CD4-positive, alpha-beta T cell (primary cell): ENCODE measurements at regions of chr16 and their contacts with region 1.

Region 1: GRCh38 chr16:67159593-67160406 is at the starts of genes FBXL8 and TRADD:
- DNase-seq: peak; percentile 60 to 91 (median 74)
- ATAC-seq: peak; percentile 66
- H3K4me3 ChIP-seq: peak within 1 kb of the TSS; percentile 100
- H3K4me3 Mint-ChIP-seq: peak within 1 kb of the TSS; percentile 95
- H3K27ac ChIP-seq: peak within 1 kb of the TSS; percentile 81 to 98
- H3K27ac Mint-ChIP-seq: peak within 1 kb of the TSS; percentile 95
- H3K4me1 ChIP-seq: peaks cover 92% of the 10 kb centered on the region
- H3K4me1 Mint-ChIP-seq: peaks cover 58% of the 10 kb centered on the region
- H3K27me3 ChIP-seq: peaks cover 23 to 32% of the 10 kb centered on the region in 2 experiments
- H3K27me3 Mint-ChIP-seq: peaks cover 35% of the 10 kb centered on the region
- CTCF ChIP-seq: peak; percentile 63
- total RNA-seq, gene FBXL8: 11.5 to 11.6 TPM
- total RNA-seq, gene TRADD: 32.4 to 34.0 TPM

Region 2: DNA sequence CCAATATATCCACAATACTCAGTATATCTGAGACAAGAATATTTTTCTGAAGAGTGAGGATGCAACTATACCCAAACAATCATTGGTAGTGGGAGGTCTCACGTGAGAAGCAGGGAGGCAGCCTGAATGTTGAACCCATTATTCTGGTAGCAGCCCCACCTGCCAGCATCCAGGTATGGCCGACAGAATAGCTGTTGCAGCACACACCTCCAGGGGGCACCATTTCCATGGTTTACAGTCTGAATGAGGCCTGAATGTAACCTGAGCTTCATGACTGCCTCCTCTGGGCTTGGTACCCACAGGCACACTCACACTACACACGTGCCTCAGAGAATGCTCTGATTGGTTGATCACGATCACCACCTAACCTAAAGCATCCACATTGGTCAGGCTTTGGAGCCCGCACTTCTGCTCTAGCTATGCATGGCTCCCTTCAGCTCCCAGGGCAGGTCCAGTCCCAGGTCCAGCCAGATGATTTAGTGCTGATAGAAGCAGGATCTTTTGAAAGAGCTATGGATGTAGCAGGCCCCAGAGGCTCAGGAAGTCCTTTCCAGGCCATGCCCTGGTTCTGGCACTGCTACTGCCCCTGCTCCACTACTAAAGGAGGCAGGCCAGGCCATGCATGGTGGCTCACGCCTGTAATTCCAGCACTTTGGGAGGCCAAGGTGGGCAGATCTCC is 141.9 kb before region 1 on chr16:
- CTCF ChIA-PET with region 1: interaction called, 43 read pairs
- POLR2A ChIA-PET with region 1: interaction called, 15 read pairs
- intact Hi-C with region 1: loop called (anchors 1 kb)
- DNase-seq: peak; percentile 74 to 93 (median 79)
- ATAC-seq: peak; percentile 90
- H3K4me3 ChIP-seq: no peak overlapping the region
- H3K4me3 Mint-ChIP-seq: peak overlapping the region; percentile 1
- H3K27ac ChIP-seq: no peak overlapping the region
- H3K27ac Mint-ChIP-seq: no peak overlapping the region
- H3K4me1 ChIP-seq: peaks cover 26% of the 10 kb centered on the region
- H3K4me1 Mint-ChIP-seq: no peaks in the 10 kb centered on the region
- H3K27me3 ChIP-seq: peaks cover 0 to 2% of the 10 kb centered on the region in 2 experiments
- H3K27me3 Mint-ChIP-seq: no peaks in the 10 kb centered on the region
- CTCF ChIP-seq: peak; percentile 50

Region 3: DNA sequence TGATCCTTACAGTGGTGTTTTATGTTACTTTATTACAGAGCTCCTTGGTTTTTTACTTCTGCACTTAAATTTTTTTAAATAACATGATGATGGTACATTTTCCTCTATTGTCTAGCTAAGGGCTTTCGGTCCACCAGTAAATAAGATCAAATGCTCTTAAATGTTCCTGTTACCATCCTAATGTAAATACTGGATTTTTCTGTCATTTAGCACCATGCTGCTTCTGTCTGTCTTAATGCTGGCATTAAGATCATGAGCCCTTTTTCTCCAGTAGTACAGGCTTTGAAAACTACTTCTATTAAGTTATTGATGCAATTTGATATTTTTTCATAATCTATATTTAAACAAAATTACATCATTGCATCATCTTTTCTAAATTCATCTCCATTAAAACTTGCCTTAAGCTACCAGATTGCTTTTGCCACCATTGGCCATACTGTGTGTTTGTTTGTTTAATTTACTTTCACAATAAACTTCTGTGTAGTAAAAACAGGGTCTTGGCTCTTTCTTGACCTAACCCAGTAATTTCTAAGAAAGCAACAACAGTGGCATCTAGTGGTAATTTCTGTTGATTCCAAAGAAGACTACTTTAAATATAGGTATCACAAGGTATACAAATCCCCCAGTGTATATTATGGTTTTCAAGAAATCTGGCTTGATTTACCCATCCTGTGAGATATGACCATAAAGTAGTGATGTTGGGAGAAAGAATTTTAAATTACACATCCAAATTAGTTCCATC is 59.1 kb before region 1 on chr16:
- CTCF ChIA-PET with region 1: interaction called, 13 read pairs
- POLR2A ChIA-PET with region 1: no interaction called
- intact Hi-C with region 1: no loop called
- DNase-seq: peak in 3 of 14 experiments; percentile 48 to 54 (median 48)
- ATAC-seq: no peak
- H3K4me3 ChIP-seq: no peak overlapping the region
- H3K4me3 Mint-ChIP-seq: no peak overlapping the region
- H3K27ac ChIP-seq: no peak overlapping the region
- H3K27ac Mint-ChIP-seq: no peak overlapping the region
- H3K4me1 ChIP-seq: no peaks in the 10 kb centered on the region
- H3K4me1 Mint-ChIP-seq: no peaks in the 10 kb centered on the region
- H3K27me3 ChIP-seq: no peaks in the 10 kb centered on the region
- H3K27me3 Mint-ChIP-seq: no peaks in the 10 kb centered on the region
- CTCF ChIP-seq: peak; percentile 38

Region 4: GRCh38 chr16:67173808-67174705 is 14.3 kb after region 1 on chr16:
- CTCF ChIA-PET with region 1: interaction called, 17 read pairs
- POLR2A ChIA-PET with region 1: interaction called, 44 read pairs
- intact Hi-C with region 1: no loop called
- DNase-seq: peak; percentile 38 to 88 (median 58)
- ATAC-seq: peak; percentile 73
- H3K4me3 ChIP-seq: peak overlapping the region; percentile 53
- H3K4me3 Mint-ChIP-seq: peak overlapping the region; percentile 82
- H3K27ac ChIP-seq: no peak overlapping the region
- H3K27ac Mint-ChIP-seq: no peak overlapping the region
- H3K4me1 ChIP-seq: peaks cover 61% of the 10 kb centered on the region
- H3K4me1 Mint-ChIP-seq: peaks cover 50% of the 10 kb centered on the region
- H3K27me3 ChIP-seq: peaks cover 33 to 43% of the 10 kb centered on the region in 2 experiments
- H3K27me3 Mint-ChIP-seq: peaks cover 80% of the 10 kb centered on the region
- CTCF ChIP-seq: no peak

Region 5: DNA sequence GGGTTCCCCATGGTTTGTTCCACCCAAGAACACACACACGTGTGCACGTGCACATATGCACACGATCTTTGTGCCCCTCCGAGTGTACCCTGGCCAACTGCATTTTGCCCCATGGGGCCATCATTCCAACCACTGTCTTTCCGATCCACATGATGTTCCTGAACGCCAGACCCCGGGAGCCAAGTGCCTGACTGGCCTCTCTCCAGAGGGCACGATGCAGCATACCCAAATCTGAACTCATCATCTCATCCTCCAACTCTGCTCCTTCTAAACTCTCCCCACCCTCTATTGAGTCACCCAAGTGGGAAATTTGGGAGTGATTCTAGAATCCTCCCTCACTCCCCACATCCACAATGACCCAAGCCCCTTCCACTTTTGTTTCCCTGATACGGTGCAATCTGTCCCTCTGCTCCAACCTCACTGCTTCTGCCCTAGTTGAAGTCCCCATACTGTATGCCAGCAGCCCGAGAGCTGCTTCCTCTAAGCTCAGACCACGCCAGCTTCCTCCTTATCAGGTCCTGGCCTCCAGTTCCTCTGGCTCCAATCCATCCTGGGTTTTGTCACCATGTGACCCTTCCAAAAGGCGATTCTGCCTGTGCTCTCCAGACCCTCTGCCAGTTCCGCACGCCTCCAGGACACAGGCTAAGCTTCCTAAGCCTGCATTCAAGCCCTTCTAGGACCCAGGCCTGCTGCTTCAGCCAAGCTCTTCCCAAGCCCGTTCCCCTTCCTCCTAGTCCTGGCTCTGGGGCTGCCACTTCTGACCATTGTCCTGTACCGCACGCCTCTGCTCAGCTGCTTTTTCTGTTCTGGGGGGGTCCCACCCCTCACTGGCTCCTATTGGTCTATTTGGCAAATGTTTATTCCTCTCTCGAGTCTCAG is 57.1 kb after region 1 on chr16:
- CTCF ChIA-PET with region 1: no interaction called
- POLR2A ChIA-PET with region 1: no interaction called
- intact Hi-C with region 1: no loop called
- DNase-seq: no peak
- ATAC-seq: no peak
- H3K4me3 ChIP-seq: no peak overlapping the region
- H3K4me3 Mint-ChIP-seq: no peak overlapping the region
- H3K27ac ChIP-seq: no peak overlapping the region
- H3K27ac Mint-ChIP-seq: no peak overlapping the region
- H3K4me1 ChIP-seq: no peaks in the 10 kb centered on the region
- H3K4me1 Mint-ChIP-seq: no peaks in the 10 kb centered on the region
- H3K27me3 ChIP-seq: no peaks in the 10 kb centered on the region
- H3K27me3 Mint-ChIP-seq: no peaks in the 10 kb centered on the region
- CTCF ChIP-seq: no peak

Region 6: GRCh38 chr16:67246934-67247697 is 87.3 kb after region 1 on chr16 and contains the start of gene FHOD1:
- CTCF ChIA-PET with region 1: interaction called, 5 read pairs
- POLR2A ChIA-PET with region 1: interaction called, 5 read pairs
- intact Hi-C with region 1: loop called in 1 of 2 experiments (anchors 1 kb)
- DNase-seq: peak; percentile 86 to 99 (median 96)
- ATAC-seq: peak; percentile 74
- H3K4me3 ChIP-seq: peak within 1 kb of the TSS; percentile 87
- H3K4me3 Mint-ChIP-seq: peak within 1 kb of the TSS; percentile 97
- H3K27ac ChIP-seq: peak within 1 kb of the TSS; percentile 65 to 74
- H3K27ac Mint-ChIP-seq: peak within 1 kb of the TSS; percentile 68
- H3K4me1 ChIP-seq: peaks cover 72% of the 10 kb centered on the region
- H3K4me1 Mint-ChIP-seq: peaks cover 42% of the 10 kb centered on the region
- H3K27me3 ChIP-seq: peaks cover 0 to 6% of the 10 kb centered on the region in 2 experiments
- H3K27me3 Mint-ChIP-seq: peaks cover 13% of the 10 kb centered on the region
- CTCF ChIP-seq: no peak
- total RNA-seq, gene FHOD1: 21.1 to 26.0 TPM

Region 7: DNA sequence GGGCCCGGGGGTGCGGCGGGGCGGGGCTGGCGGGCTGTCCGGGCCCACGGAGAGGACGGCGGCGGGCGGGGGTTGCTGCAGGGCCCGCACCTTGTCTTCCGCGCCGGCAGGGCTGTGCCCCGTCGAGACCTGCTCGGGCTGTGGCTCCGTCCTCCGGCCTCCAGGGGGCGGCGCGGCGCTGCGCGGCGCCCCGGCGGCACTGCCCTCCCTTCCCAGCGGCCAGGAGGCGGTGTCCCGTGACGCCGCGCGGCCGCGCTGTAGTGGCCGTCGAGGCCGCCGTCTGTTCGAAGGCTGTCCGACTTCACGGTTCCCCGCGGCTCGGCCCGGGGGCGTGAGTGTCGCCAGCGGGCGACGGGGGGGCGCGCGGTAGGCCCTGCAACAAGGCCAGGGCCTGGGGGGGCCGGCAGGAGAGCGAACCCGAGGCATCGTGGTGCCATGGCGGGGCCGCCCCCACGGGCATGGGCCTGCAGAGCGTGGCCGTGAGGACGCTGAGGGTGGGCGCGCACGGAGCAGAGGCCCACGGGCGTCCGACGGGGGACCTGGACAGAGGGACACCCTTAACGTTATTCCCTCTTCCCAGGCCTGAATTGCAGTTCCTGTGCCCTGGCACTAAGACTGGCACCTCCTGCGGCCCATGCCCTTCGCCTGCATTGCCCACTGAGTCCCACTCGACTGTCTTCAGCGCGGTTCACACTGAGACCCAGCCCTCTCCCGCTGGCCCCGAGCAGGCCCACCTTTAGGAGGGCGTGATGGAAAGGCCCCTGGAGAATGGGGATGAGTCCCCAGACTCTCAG is 119.7 kb after region 1 on chr16 and contains the start of gene PLEKHG4:
- CTCF ChIA-PET with region 1: no interaction called
- POLR2A ChIA-PET with region 1: no interaction called
- intact Hi-C with region 1: no loop called
- DNase-seq: peak; percentile 65 to 92 (median 76)
- ATAC-seq: peak; percentile 97
- H3K4me3 ChIP-seq: peak within 1 kb of the TSS; percentile 74
- H3K4me3 Mint-ChIP-seq: peak within 1 kb of the TSS; percentile 88
- H3K27ac ChIP-seq: peak within 1 kb of the TSS in 1 of 2 donors; percentile 27
- H3K27ac Mint-ChIP-seq: peak within 1 kb of the TSS; percentile 64
- H3K4me1 ChIP-seq: peaks cover 27% of the 10 kb centered on the region
- H3K4me1 Mint-ChIP-seq: peaks cover 17% of the 10 kb centered on the region
- H3K27me3 ChIP-seq: no peaks in the 10 kb centered on the region
- H3K27me3 Mint-ChIP-seq: no peaks in the 10 kb centered on the region
- CTCF ChIP-seq: peak; percentile 55
- total RNA-seq, gene PLEKHG4: 13.1 to 14.0 TPM